Activated CD8-positive, alpha-beta T cell treated with anti-CD3 and anti-CD28 coated beads for 36 hours (primary cell): ENCODE measurements at regions of chr7 and their contacts with region 1.

Region 1: GRCh38 chr7:149125863-149126661 is at the start of gene ZNF425:
- DNase-seq: peak; percentile 92
- ATAC-seq: peak; percentile 88
- H3K4me3 Mint-ChIP-seq: peak within 1 kb of the TSS; percentile 95
- H3K27ac Mint-ChIP-seq: peak within 1 kb of the TSS; percentile 98
- H3K4me1 Mint-ChIP-seq: peaks cover 19% of the 10 kb centered on the region
- H3K27me3 Mint-ChIP-seq: no peaks in the 10 kb centered on the region
- CTCF ChIP-seq: peak; percentile 89
- total RNA-seq, gene ZNF425: 0.22 to 0.29 TPM

Region 2: DNA sequence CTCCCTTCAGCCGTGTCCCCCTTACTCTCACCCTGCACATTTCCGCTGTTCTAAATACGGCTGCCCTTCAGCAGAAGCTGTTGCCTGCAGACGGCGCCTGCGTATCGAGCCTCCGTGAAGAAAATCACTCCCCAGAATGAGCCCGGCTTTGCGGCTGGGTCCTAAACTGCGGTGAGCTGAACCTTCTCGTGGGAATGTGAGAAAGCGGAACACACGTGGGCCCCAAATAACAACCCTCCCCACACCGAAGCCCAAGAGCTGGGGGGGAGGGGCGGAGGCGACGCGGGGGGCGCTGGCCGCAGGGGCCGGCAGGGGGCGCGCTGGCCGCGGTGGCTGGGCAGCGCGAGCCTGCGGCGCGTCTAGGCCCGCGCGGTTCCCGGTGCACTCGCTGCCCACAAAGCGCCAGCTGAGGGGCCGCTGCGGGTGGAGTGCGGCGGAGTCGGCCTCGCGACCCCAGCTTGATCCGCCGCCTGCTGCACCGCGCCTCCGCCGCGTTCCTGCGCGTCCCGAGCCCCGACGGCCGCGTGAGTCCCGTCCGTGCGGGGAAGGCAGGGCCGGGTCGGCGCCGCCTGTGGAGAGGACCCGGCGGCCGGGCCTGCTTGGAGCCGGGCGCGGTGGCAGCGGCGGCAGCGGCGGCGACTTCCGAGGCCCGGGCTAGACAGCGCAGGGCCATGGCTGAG is 21.1 kb after region 1 on chr7 and contains the start of gene ZNF398:
- CTCF ChIA-PET with region 1: interaction called, 52 read pairs
- POLR2A ChIA-PET with region 1: interaction called, 34 read pairs
- intact Hi-C with region 1: no loop called
- DNase-seq: peak; percentile 75
- ATAC-seq: peak; percentile 86
- H3K4me3 Mint-ChIP-seq: peak within 1 kb of the TSS; percentile 97
- H3K27ac Mint-ChIP-seq: peak within 1 kb of the TSS; percentile 95
- H3K4me1 Mint-ChIP-seq: peaks cover 28% of the 10 kb centered on the region
- H3K27me3 Mint-ChIP-seq: no peaks in the 10 kb centered on the region
- CTCF ChIP-seq: peak; percentile 87
- total RNA-seq, gene ZNF398: 7.2 to 8.7 TPM

Region 3: DNA sequence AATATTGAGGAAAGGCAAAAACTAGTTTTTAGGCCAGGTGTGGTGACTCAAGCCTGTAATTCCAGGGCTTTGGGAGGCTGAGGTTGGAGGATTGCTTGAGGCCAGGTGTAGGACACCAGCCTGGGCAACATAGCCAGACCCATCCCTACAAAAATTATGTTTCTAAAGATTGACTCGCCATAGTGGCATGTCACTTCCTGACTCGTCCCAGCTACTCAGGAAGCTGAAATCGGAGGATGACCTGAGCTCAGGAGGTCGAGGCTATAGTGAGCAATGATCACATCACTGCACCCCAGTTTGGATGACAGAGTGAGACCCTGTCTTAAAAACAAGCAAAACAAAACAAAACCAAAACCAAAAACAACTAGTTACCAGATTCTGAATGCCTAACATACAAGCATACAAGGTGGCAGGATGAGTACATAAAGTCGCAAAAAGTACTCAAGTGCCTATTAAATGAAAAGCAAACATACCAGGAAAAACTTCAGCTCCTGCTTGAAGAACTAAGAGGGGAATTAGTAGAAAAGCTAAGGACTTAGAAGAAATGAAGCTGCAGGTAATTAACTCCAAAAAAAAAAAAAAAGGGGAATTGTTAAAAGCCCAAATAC is 35.3 kb after region 1 on chr7:
- CTCF ChIA-PET with region 1: no interaction called
- POLR2A ChIA-PET with region 1: no interaction called
- intact Hi-C with region 1: no loop called
- DNase-seq: peak; percentile 21
- ATAC-seq: peak; percentile 65
- H3K4me3 Mint-ChIP-seq: no peak overlapping the region
- H3K27ac Mint-ChIP-seq: no peak overlapping the region
- H3K4me1 Mint-ChIP-seq: peaks cover 29% of the 10 kb centered on the region
- H3K27me3 Mint-ChIP-seq: no peaks in the 10 kb centered on the region
- CTCF ChIP-seq: no peak

Region 4: DNA sequence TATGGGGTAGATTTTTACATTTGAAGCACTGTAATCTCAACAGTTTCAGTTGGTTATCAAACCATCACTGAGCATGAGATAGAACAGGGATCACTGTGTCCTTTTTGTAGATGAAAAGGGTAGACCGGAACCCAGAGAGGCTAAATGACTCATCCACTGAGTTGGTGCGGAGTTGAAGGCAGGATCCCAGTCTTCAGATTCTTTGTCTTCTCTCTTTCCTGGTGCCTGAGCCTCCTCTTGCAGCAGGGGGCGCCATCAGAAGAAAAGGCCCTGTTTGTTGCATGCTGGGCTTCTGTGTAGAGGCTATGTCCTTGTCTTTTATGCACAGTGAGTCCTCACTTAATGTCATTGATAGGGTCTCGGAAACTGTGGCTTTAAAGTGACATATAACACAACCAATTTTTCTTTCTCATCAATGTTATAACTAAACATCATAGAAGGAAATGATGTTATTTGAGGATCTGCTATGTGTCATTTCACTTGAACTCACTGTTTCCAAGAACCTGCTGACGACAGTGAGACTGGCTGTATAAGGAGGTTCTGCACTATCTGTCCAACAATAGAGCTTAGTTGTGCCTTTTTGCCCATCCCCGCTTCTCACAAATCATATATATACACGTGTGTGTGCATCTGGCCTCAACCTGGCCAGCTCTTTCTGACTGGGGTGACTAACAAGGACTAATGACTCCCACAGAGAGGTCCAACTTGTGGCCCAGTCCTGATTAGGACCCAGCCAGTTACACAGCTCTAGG is 83.6 kb after region 1 on chr7:
- CTCF ChIA-PET with region 1: no interaction called
- POLR2A ChIA-PET with region 1: no interaction called
- intact Hi-C with region 1: no loop called
- DNase-seq: peak; percentile 90
- ATAC-seq: peak; percentile 90
- H3K4me3 Mint-ChIP-seq: no peak overlapping the region
- H3K27ac Mint-ChIP-seq: peak overlapping the region; percentile 91
- H3K4me1 Mint-ChIP-seq: peaks cover 20% of the 10 kb centered on the region
- H3K27me3 Mint-ChIP-seq: no peaks in the 10 kb centered on the region
- CTCF ChIP-seq: peak; percentile 68